Calu3 (cell line): ENCODE measurements at regions of chr12 and their contacts with region 1.

Region 1: DNA sequence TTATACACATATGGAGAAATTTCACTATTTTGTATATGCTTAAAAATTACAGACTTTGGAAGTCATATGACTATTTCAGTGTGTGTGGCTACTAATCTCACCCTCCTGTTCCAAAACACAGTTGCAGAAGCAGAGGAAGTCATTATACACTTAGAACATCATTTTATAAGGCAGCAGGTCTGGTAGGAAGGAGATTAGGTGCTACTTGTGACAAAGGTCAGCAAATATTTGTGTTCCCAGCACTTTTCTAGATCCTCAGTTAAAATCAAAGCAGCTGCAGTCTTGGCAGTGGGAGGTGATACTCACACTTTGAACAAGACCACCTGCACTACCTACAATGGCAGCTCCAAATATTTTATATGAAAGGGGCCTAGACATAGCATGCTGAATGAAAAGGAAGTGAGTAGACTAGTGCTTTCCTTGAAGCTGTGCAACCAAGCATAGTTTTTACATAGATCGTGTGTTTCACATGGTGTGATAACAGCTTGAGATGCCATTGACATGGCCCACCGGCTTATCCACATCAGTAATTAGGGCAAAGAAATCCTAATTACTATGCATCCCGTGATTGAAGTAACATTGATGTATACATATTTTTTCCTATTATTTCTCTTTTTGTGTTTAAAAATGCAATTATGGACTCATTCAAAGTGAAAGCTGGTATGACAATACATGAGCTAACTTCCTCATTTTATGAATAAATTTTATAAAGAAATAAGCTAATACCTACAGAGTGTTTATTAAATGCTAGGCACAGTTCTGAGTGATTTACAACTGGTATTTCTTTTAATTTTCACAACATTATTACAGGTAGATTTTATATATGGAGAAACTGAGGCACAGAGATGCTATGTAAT is 5.3 kb downstream of the GYS2 start:
- DNase-seq: no peak
- H3K4me3 Mint-ChIP-seq: no peak overlapping the region
- H3K27ac Mint-ChIP-seq: no peak overlapping the region
- H3K4me1 Mint-ChIP-seq: no peaks in the 10 kb centered on the region
- H3K27me3 Mint-ChIP-seq: peaks cover 13% of the 10 kb centered on the region
- CTCF ChIP-seq: no peak

Region 2: DNA sequence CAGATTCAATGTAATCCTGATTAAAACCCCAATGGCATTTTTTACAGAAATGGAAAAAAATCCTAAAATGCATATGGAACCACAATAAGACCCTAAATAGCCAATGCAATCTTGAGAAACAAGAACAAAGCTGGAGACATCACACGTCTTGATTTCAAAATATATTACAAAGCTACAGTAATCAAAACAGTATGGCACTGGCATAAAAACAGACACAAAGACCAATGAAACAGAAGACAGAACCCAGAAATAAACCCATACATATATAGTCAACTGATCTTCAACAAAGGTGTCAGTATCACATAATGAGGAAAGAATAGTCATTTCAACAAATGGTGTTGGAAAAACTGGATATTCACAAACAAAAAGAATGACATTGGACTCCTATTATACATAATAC is 351.3 kb after region 1 on chr12:
- CTCF ChIA-PET with region 1: no interaction called
- intact Hi-C with region 1: loop called (anchors 5 kb)
- DNase-seq: no peak
- H3K4me3 Mint-ChIP-seq: no peak overlapping the region
- H3K27ac Mint-ChIP-seq: no peak overlapping the region
- H3K4me1 Mint-ChIP-seq: no peaks in the 10 kb centered on the region
- H3K27me3 Mint-ChIP-seq: no peaks in the 10 kb centered on the region
- CTCF ChIP-seq: no peak